Transverse colon (tissue), 4 donors: ENCODE measurements at regions of chr7 and their contacts with region 1.

Region 1: DNA sequence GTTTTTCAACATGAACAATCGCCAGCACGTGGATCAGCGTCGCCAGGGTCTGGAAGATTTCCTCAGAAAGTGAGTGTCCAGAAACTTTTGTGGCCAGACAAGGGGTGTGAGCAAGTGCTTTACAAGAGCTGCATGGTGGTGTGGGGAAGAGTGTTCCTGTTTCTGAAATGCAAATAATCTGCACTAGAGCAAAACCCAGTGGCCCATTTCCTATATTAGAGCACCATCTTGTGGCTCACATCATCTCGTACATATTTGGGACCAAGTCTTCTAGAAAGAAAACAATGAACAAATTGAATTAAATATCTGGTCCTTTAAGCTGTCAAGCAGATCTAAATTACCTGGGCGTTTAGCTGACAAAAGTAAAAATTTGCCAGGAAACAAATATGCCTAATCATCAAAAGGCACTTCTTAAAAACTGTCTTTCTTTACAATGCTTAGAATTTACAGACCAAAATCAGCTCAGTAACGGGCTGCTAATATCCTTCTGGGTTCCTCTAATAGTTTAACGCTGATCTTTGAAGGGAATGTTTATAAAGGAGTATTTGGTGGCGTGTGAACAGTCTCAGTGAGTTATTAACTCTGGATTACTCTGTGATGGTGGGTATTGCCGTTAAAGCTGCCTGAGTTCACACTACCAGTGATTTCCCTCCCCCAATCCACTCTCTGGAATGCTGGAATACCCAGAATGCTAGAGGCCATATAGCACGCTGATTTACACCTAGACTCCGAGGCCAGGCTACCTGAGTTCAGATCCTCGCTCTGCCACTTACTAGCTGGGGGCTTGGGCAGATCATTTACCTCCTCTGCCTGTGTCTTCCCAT is 73.6 kb downstream of the SNX10 start:
- DNase-seq: peak; percentile 57
- H3K4me3 ChIP-seq: no peak overlapping the region
- H3K27ac ChIP-seq: no peak overlapping the region
- H3K4me1 ChIP-seq: peaks cover 0 to 13% (median 3%) of the 10 kb centered on the region in 4 donors
- H3K27me3 ChIP-seq: peaks cover 16% of the 10 kb centered on the region
- CTCF ChIP-seq: peak; percentile 69 to 86 (median 77)
- EP300 ChIP-seq: no peak
- POLR2A ChIP-seq: no peak

Region 2: DNA sequence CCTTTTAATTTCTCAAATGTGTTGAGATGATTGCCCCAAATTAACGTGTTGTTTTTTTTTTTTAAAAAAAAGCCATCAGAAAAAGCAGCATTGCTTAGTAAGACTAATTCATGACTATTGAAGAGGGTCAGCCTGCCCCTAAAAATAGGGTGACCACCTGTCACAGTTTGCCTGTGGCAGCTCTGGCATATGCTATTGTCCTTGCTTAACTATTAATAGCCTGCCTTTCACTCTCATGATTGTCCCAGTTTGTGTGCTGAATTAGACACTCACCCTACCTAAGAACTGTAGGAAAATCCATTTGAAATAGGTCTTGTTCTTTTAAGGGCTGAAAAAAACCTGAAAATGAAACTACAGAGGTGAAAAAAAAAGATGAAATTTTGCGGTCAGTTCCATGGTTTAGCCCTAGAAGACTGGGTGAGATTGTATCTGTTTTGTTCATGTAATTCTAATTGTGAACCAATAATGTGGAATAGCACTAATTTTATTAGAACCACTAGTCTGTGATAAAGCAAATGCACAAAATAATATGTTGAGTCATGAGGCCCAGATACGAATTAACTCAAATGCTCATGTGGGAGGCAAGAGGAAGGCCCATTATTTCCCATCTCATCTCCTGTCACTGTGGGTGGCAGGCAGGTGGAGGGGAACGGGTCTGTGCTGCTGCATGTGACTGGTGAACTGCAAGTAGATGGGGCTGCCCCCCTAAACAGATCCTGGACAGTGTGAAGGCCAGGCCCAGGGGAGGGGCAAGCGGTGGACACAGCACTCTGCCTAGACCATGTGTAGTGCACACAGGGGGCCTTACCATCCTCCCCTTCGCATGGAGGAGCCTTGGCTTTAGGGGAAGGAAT is 478.7 kb before region 1 on chr7:
- in situ Hi-C with region 1: loop called (anchors 5 to 10 kb)
- intact Hi-C with region 1: no loop called
- DNase-seq: no peak
- H3K4me3 ChIP-seq: no peak overlapping the region
- H3K27ac ChIP-seq: no peak overlapping the region
- H3K4me1 ChIP-seq: no peaks in the 10 kb centered on the region
- H3K27me3 ChIP-seq: peaks cover 51% of the 10 kb centered on the region
- CTCF ChIP-seq: no peak
- EP300 ChIP-seq: no peak
- POLR2A ChIP-seq: no peak

Region 3: GRCh38 chr7:26078437-26079336 is 286.6 kb before region 1 on chr7:
- in situ Hi-C with region 1: loop called in 1 of 4 experiments (anchors 10 kb)
- intact Hi-C with region 1: no loop called
- DNase-seq: peak; percentile 80
- H3K4me3 ChIP-seq: no peak overlapping the region
- H3K27ac ChIP-seq: no peak overlapping the region
- H3K4me1 ChIP-seq: peaks cover 0 to 14% (median 4%) of the 10 kb centered on the region in 4 donors
- H3K27me3 ChIP-seq: peaks cover 63% of the 10 kb centered on the region
- CTCF ChIP-seq: peak in 2 of 5 experiments; percentile 30 to 38
- EP300 ChIP-seq: no peak
- POLR2A ChIP-seq: no peak

Region 4: DNA sequence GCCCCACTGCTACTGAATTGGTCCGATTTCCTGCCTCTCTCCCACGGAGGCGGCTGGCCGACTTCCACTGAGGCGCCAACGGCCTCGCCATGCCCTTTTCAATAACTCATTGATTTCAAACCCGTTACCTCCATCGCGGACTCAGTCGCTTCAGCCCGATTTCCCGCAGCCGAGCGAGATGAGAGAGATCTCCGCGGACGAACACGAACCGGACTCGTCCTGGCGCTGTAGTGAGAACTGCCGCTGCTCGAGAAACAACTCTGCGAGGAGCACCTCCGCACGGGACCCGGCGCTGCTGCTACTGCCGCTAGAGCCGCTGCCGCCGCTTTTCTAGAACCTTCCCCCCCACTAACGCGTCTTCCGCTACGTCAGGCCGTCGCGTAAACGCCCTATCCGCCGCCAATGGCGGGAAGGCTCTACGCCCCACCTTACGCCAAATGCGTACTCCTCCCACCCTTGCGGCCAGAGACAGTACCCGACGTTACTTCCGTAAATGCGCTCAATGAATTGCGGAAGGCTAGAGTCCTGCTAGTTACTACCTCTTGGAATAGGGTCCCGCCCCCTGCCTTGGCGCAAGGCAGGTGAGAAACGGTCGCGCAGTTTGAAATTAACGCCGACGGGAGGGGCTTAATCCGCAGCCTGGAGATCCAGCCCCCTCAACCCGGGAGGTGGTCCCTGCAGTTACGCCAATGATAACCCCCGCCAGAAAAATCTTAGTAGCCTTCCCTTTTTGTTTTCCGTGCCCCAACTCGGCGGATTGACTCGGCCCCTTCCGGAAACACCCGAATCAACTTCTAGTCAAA is 164.6 kb before region 1 on chr7 and contains the start of gene HNRNPA2B1:
- in situ Hi-C with region 1: no loop called
- intact Hi-C with region 1: loop called (anchors 10 kb)
- DNase-seq: peak; percentile 97
- H3K4me3 ChIP-seq: peak within 1 kb of the TSS; percentile 78 to 98 (median 86)
- H3K27ac ChIP-seq: peak within 1 kb of the TSS; percentile 97 to 100 (median 99)
- H3K4me1 ChIP-seq: peaks cover 34 to 56% (median 41%) of the 10 kb centered on the region in 4 donors
- H3K27me3 ChIP-seq: no peaks in the 10 kb centered on the region
- CTCF ChIP-seq: peak in 4 of 5 experiments; percentile 7 to 55 (median 30)
- EP300 ChIP-seq: peak; percentile 57
- POLR2A ChIP-seq: peak; percentile 100
- total RNA-seq, gene HNRNPA2B1: 123 to 362 (median 208) TPM

Region 5: GRCh38 chr7:26376175-26376917 is 11.1 kb after region 1 on chr7:
- in situ Hi-C with region 1: no loop called
- intact Hi-C with region 1: no loop called
- DNase-seq: peak; percentile 39
- H3K4me3 ChIP-seq: peak overlapping the region; percentile 35 to 69 (median 50)
- H3K27ac ChIP-seq: peak overlapping the region; percentile 51 to 67 (median 60)
- H3K4me1 ChIP-seq: peaks cover 0 to 16% (median 9%) of the 10 kb centered on the region in 4 donors
- H3K27me3 ChIP-seq: peaks cover 80% of the 10 kb centered on the region
- CTCF ChIP-seq: no peak
- EP300 ChIP-seq: no peak
- POLR2A ChIP-seq: no peak

Region 6: GRCh38 chr7:26667500-26668133 is 302.3 kb after region 1 on chr7:
- in situ Hi-C with region 1: loop called (anchors 5 to 10 kb)
- intact Hi-C with region 1: no loop called
- DNase-seq: peak; percentile 73
- H3K4me3 ChIP-seq: no peak overlapping the region
- H3K27ac ChIP-seq: no peak overlapping the region
- H3K4me1 ChIP-seq: peaks cover 0 to 18% (median 0%) of the 10 kb centered on the region in 4 donors
- H3K27me3 ChIP-seq: no peaks in the 10 kb centered on the region
- CTCF ChIP-seq: peak; percentile 64 to 88 (median 71)
- EP300 ChIP-seq: no peak
- POLR2A ChIP-seq: no peak

Region 7: DNA sequence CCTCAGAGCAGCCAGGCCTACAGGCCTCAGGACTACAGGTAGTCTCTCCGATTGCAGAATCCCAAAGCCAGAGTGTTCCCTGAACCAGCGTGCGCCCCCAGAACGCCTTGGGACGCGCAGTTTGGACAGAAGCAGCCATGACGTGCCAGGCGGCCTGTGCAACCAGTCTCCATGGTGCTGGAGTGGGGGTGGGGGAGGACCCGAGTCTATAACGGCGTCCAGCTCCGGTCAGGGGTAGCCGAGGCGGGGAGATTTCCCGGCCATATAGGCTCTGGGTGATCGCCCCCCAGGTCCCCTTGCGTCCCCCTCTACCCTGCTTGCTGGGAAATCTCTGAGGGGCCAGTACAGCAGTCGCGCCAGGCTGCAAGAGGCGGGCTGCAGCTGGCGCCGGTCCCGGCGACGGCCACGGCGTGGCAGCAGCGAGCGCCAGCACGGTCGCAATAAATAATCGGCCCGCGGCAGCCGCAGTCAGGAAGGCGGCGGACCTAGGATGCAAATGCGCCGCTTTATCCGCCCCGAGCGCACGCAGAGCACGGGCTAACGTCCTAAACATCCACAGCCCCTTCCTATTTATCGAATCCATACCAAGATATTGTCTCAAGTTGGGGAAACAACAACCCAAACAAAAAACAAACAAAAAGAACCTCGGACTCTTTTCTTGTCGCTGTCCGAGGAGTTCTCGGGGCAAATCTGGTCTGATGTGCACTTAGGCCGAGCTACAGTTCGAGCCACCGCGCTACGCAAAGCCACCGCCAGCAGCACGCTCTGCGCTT is 785.5 kb after region 1 on chr7:
- in situ Hi-C with region 1: loop called in 3 of 4 experiments (anchors 5 to 25 kb)
- intact Hi-C with region 1: no loop called
- DNase-seq: peak; percentile 86
- H3K4me3 ChIP-seq: peak overlapping the region; percentile 71 to 81 (median 76)
- H3K27ac ChIP-seq: peak overlapping the region; percentile 95 to 99 (median 98)
- H3K4me1 ChIP-seq: peaks cover 21 to 85% (median 64%) of the 10 kb centered on the region in 4 donors
- H3K27me3 ChIP-seq: peaks cover 58% of the 10 kb centered on the region
- CTCF ChIP-seq: peak; percentile 86 to 97 (median 93)
- EP300 ChIP-seq: no peak
- POLR2A ChIP-seq: peak; percentile 96